Activated naive CD4-positive, alpha-beta T cell treated with anti-CD3 and anti-CD28 coated beads for 36 hours (primary cell): ENCODE measurements at regions of chr15 and their contacts with region 1.

Region 1: GRCh38 chr15:95259513-95259912 is 1028.2 kb downstream of the MCTP2 start:
- DNase-seq: peak; percentile 72
- H3K4me3 Mint-ChIP-seq: no peak overlapping the region
- H3K27ac Mint-ChIP-seq: no peak overlapping the region
- H3K4me1 Mint-ChIP-seq: no peaks in the 10 kb centered on the region
- H3K27me3 Mint-ChIP-seq: peaks cover 36% of the 10 kb centered on the region

Region 2: GRCh38 chr15:95291898-95292472 is 32.5 kb after region 1 on chr15:
- CTCF ChIA-PET with region 1: interaction called, 5 read pairs
- intact Hi-C with region 1: loop called (anchors 1 kb)
- DNase-seq: no peak
- H3K4me3 Mint-ChIP-seq: no peak overlapping the region
- H3K27ac Mint-ChIP-seq: no peak overlapping the region
- H3K4me1 Mint-ChIP-seq: peaks cover under 1% of the 10 kb centered on the region
- H3K27me3 Mint-ChIP-seq: peaks cover 44% of the 10 kb centered on the region

Region 3: DNA sequence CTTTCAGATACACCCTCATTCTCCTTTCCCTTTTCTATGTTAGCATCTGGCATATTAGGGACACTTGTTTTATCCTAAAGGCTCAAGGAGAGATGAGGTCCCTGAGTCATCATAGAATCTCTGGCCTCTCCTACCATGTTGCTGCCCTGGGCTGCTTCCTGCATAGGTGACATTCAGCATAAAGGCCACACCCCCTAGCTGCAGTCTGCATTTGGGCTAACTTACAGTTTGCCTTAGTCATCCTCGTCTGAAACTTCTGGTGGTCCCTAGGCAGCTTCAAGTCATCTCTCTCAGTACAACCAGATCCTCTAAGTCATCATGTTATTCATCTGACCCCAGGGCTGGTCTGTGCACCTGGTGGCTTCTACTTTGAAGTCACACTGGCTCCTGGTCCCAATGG is 88.3 kb after region 1 on chr15:
- CTCF ChIA-PET with region 1: no interaction called
- intact Hi-C with region 1: no loop called
- DNase-seq: no peak
- H3K4me3 Mint-ChIP-seq: no peak overlapping the region
- H3K27ac Mint-ChIP-seq: no peak overlapping the region
- H3K4me1 Mint-ChIP-seq: no peaks in the 10 kb centered on the region
- H3K27me3 Mint-ChIP-seq: peaks cover 3% of the 10 kb centered on the region

Region 4: DNA sequence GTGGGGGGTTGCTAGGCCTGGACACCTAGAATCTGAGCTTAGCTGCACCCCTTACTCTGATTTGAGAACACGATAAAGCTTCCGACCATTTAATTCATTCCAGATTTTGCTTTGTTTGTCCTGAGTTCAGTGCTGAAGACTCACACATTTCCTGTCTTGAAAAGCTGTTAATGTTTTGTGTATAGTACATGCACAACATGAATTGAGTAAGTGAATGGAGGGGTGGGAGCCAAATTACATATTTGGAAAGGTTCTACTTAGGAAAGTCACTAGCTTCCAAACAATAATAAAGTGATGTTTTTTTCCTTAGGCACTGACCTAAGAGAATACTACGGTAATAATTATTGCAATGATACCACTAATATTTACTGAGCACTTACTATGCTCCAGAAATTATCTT is 115.8 kb after region 1 on chr15:
- CTCF ChIA-PET with region 1: no interaction called
- intact Hi-C with region 1: no loop called
- DNase-seq: no peak
- H3K4me3 Mint-ChIP-seq: no peak overlapping the region
- H3K27ac Mint-ChIP-seq: no peak overlapping the region
- H3K4me1 Mint-ChIP-seq: no peaks in the 10 kb centered on the region
- H3K27me3 Mint-ChIP-seq: peaks cover 3% of the 10 kb centered on the region

Region 5: GRCh38 chr15:95409626-95410310 is 150.3 kb after region 1 on chr15:
- CTCF ChIA-PET with region 1: no interaction called
- intact Hi-C with region 1: no loop called
- DNase-seq: no peak
- H3K4me3 Mint-ChIP-seq: no peak overlapping the region
- H3K27ac Mint-ChIP-seq: no peak overlapping the region
- H3K4me1 Mint-ChIP-seq: no peaks in the 10 kb centered on the region
- H3K27me3 Mint-ChIP-seq: no peaks in the 10 kb centered on the region

Region 6: DNA sequence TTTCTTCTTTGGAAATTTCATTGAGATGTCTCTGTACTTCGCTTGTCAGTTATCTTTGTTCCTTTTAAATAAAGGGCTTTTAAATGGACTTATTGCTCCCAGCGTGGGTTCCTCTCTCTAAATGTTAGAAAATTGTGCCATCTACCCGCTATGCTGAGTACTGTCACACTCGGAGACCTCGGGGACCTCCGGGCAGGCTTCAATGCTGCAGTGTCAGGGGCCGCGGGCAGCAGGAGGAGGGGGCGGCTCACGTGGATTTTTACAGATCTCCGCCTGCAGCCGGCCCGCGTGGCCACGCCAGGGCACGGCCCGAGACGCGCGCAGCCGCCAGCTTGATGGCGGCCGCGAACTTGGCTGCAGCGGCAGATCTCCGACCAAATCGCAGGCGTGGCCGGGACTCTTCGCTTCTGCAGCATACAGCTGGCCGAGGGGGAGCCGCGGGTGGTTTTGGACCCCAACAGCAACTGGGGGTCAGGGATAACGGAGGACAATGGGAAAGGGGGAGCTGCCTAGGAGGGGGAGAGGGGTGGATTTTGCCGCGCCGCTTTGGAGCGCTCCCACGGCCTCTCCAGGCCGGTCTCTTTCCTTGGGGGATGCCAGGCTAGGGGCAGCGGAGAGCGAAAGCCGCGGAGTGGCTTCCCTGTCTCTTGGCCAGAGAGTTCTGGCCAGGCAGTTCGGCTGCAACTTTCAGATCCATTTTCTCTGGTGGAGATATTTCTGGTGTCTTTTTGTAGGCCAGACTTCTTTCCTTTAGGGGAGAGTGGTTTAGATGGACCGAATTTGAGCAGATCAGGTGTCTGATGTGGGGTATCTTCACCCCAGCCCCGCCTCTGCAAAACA is 1086.3 kb after region 1 on chr15:
- CTCF ChIA-PET with region 1: no interaction called
- intact Hi-C with region 1: loop called (anchors 1 kb)
- DNase-seq: peak; percentile 27
- H3K4me3 Mint-ChIP-seq: no peak overlapping the region
- H3K27ac Mint-ChIP-seq: no peak overlapping the region
- H3K4me1 Mint-ChIP-seq: peaks cover 18% of the 10 kb centered on the region
- H3K27me3 Mint-ChIP-seq: peaks cover 91% of the 10 kb centered on the region

Region 7: DNA sequence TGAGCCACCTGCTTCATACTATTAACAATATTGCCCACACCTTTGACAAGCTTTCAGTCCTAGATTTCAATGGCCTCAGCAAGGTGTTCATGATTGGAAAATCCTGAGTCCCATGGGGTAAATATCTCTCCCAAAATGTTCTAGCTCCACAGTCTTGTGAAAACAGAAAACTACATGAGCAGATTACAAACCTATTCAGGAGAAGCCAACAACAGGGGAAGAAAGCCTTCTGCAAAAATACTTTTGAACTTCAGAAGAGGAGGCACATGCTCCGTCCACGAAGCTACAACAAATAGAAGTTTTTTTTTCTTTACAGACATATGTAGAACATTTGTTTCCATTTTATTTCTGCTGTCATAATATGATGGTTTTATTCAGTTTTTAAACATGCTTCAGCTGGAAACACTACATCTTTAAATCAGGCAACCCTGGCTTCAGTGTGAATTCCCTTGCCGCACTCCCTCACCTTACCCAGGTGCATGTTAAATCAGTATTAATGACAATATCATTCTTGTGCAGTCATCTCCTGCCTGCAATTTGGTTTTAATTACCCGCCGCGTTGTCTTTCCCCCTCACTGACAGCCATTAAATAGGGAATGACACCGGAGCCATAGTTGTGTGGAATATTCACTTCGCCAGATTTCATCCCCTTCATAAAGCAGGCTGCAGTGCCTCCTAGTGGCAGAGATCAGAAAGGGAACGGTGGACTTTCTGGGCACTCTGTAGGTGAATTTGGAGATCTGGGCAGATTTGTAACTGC is 1975.5 kb after region 1 on chr15:
- CTCF ChIA-PET with region 1: interaction called, 8 read pairs
- intact Hi-C with region 1: loop called (anchors 1 kb)
- DNase-seq: peak; percentile 55
- H3K4me3 Mint-ChIP-seq: no peak overlapping the region
- H3K27ac Mint-ChIP-seq: no peak overlapping the region
- H3K4me1 Mint-ChIP-seq: peaks cover 2% of the 10 kb centered on the region
- H3K27me3 Mint-ChIP-seq: peaks cover 20% of the 10 kb centered on the region